Mammary epithelial cell (primary cell): ENCODE measurements at regions of chr5 and their contacts with region 1.

Region 1: DNA sequence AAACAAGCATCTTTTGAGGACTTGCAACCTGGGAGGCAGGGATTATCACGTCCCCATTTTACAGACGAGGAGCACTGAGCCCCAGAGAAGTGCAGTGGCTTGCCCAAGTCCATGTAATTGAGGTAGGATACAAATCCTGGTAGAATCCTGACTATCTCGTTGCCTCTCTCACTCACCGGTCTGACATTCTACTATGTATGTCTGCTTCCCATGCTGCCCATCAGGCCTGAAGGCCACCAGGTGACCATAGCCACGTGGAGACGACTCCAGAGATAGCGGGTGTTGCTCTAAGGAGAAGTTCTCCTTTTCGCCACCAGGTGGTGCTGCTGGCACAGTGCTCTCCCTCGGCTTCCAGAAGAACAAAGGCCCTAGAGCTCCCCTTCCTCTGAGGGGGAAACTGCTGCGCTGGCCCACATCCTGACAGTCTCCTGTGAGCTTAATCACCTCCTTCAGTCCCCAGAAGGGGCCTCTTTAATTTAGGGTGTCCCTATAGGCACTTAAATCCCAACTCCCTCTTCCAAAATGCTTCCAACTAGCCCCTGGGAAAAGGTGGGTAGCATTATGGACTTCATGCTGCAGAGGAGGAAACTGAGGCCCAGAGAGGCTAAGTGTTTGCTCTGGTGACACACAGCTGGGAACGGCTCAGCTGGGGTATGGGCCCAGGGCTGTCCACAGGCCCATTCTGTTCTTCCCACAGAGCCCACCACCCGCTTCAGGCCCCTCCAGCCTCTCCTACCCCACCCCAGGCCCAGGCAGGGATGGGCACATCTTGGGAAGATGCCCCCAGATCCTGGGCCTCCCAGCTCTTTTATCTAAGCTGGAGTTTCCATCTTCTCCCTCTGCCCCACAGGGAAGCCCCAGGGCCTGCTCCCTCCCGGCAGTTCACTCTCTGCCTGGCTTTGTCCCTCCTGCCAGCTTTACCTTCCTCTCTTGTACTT is 6.4 kb downstream of the SLC34A1 start:
- DNase-seq: peak; percentile 73
- H3K4me3 ChIP-seq: no peak overlapping the region
- H3K27ac ChIP-seq: peak overlapping the region; percentile 68
- H3K4me1 ChIP-seq: peaks cover 29% of the 10 kb centered on the region
- H3K27me3 ChIP-seq: no peaks in the 10 kb centered on the region
- CTCF ChIP-seq: peak; percentile 89 to 94

Region 2: DNA sequence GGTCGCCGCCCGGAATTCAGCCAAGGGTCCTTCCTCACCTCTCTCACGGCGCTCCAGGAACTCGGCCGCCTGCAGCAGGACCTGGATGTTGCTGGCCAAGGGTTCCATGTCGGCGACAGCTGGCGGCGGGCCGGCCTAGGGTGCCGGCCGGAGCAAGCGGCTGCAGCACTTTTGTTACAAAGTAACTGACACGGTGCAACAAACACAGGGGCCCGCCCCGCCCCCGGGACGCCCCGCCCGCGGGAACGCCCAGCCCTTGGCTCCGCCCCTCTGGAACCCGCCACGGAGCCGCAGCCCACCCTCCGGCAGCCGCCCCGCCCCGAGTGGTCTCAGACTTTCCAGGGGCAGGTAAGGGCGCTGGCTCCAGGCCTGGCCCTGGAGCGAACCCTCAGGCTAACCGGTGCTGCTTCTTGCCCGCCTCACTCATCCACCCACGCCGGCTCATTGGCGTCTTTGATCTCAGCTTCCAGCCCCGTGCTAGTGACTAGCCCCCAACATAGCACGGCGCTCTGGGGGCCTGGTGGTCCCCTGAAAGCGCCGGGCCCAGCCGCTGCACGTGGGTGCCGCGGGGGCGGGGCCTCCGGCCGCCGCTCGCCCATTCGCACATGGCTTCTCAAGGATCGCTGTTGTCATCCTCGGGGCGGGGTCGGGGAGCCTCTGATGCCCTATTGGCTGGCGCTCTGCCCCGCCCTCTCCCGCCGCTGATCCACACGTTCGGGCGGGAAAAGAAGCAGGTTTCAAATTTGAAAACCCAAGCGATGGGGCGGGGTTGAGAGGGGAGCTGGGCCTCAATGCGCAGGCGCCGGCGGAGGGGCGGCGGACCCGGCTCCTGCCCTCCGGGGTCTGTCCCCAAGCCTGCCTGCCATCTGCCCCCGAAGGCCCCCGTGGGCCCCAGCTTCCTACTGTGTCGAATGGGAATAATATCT is 78.6 kb before region 1 on chr5 and contains the start of gene MXD3:
- CTCF ChIA-PET with region 1: no interaction called
- dilution Hi-C with region 1: no loop called
- in situ Hi-C with region 1: no loop called
- intact Hi-C with region 1: loop called (anchors 2 kb)
- DNase-seq: peak; percentile 90
- H3K4me3 ChIP-seq: peak within 1 kb of the TSS; percentile 51 to 75 (median 63)
- H3K27ac ChIP-seq: peak within 1 kb of the TSS; percentile 62
- H3K4me1 ChIP-seq: peaks cover 27% of the 10 kb centered on the region
- H3K27me3 ChIP-seq: no peaks in the 10 kb centered on the region
- CTCF ChIP-seq: no peak
- total RNA-seq, gene MXD3: 0.83 to 10.7 TPM

Region 3: GRCh38 chr5:177317959-177318377 is 72.7 kb before region 1 on chr5:
- CTCF ChIA-PET with region 1: interaction called, 3 read pairs
- dilution Hi-C with region 1: no loop called
- in situ Hi-C with region 1: no loop called
- intact Hi-C with region 1: loop called (anchors 2 kb)
- DNase-seq: peak; percentile 61
- H3K4me3 ChIP-seq: no peak overlapping the region
- H3K27ac ChIP-seq: no peak overlapping the region
- H3K4me1 ChIP-seq: peaks cover 2% of the 10 kb centered on the region
- H3K27me3 ChIP-seq: no peaks in the 10 kb centered on the region
- CTCF ChIP-seq: peak; percentile 88

Region 4: GRCh38 chr5:177351385-177352329 is 39.0 kb before region 1 on chr5 and contains the start of gene LMAN2:
- CTCF ChIA-PET with region 1: no interaction called
- dilution Hi-C with region 1: no loop called
- in situ Hi-C with region 1: no loop called
- intact Hi-C with region 1: loop called (anchors 1 kb)
- DNase-seq: peak; percentile 97
- H3K4me3 ChIP-seq: peak within 1 kb of the TSS; percentile 58 to 86 (median 74)
- H3K27ac ChIP-seq: peak within 1 kb of the TSS; percentile 88
- H3K4me1 ChIP-seq: peaks cover 19% of the 10 kb centered on the region
- H3K27me3 ChIP-seq: no peaks in the 10 kb centered on the region
- CTCF ChIP-seq: no peak
- total RNA-seq, gene LMAN2: 114 to 201 TPM

Region 5: GRCh38 chr5:177362610-177363507 is 27.8 kb before region 1 on chr5:
- CTCF ChIA-PET with region 1: interaction called, 12 read pairs
- dilution Hi-C with region 1: no loop called
- in situ Hi-C with region 1: no loop called
- intact Hi-C with region 1: loop called (anchors 1 kb)
- DNase-seq: peak; percentile 66
- H3K4me3 ChIP-seq: peak overlapping the region; percentile 47 to 67 (median 63)
- H3K27ac ChIP-seq: no peak overlapping the region
- H3K4me1 ChIP-seq: peaks cover 22% of the 10 kb centered on the region
- H3K27me3 ChIP-seq: no peaks in the 10 kb centered on the region
- CTCF ChIP-seq: peak in 1 of 2 donors; percentile 10

Region 6: DNA sequence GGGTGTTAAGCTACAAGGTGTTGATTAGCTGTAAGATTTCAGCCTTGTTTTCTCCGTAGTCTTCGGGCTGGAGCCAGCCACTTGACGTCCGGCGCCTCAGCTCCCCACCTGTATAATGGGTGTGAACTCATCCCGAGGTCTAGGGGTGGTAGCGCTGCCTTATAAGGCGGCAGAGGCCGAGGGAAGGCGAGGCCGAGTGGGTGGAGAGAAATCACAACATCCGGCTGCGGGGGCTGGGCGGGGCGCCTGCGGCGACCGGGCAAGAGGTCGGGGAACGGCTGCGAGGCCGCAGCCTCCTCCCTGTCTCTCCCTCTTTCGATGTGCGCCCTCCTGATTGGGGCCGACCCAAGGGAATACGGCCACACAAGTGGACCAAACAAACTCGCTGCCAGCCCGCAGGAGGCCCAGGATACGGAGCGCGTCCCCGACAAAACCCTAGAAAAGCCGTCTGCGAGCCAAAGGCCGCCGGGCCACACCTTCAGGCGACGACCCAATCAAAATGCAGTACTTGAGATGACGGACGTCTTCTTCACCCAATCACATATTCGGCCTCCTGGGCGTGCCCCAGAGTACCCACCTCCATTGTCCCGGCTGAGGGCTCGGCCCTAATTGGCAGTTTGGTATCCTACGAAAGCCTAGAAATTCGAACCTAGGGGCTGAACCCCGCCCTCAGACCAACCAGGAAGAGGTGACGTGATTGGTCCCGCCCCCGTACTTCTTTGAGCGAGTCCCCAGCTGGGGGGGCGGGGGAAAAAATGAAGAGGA is 35.4 kb after region 1 on chr5:
- CTCF ChIA-PET with region 1: no interaction called
- dilution Hi-C with region 1: no loop called
- in situ Hi-C with region 1: no loop called
- intact Hi-C with region 1: loop called (anchors 1 kb)
- DNase-seq: peak; percentile 100
- H3K4me3 ChIP-seq: peak overlapping the region; percentile 51 to 68 (median 54)
- H3K27ac ChIP-seq: peak overlapping the region; percentile 71
- H3K4me1 ChIP-seq: peaks cover 31% of the 10 kb centered on the region
- H3K27me3 ChIP-seq: no peaks in the 10 kb centered on the region
- CTCF ChIP-seq: no peak

Region 7: DNA sequence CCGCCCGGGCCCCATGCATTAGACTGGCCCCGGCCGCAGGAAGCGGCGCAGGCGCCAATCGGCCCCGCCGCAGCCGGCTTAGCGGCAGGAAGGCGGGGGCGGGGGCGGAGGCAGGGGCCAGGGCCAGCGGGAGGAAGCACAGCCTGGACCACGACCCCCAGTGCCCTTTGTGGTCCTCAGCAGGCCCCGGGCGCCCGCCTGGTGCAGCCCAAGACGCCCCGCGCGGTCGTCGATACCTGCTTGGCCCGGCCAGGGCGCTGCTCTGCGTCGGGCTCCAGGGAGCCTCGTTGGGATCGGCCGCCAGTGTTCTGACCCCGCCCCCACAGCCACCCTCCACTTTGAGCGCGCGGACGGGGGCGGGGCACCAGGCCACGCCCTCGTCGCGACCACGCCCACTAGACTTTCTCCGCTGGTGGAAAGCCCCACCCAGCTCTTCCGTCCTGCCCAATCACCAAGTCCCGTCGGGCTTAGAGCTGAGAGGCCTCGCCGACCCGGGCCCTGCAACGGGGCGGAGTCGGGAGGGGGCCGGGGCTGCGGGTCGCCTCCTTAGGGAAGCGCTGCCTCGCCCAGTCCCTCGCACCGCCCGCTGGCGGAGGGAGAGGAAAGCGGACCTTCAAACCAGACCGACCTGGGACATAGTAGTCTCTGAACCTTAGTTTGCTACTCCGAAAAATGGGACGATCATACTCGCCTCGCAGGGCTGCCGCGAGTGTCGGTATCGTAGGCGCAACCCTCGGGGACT is 106.8 kb after region 1 on chr5 and contains the start of gene PDLIM7:
- CTCF ChIA-PET with region 1: no interaction called
- dilution Hi-C with region 1: no loop called
- in situ Hi-C with region 1: no loop called
- intact Hi-C with region 1: loop called (anchors 1 kb)
- DNase-seq: peak; percentile 95
- H3K4me3 ChIP-seq: peak within 1 kb of the TSS; percentile 73 to 80 (median 74)
- H3K27ac ChIP-seq: peak within 1 kb of the TSS; percentile 37
- H3K4me1 ChIP-seq: peaks cover 61% of the 10 kb centered on the region
- H3K27me3 ChIP-seq: no peaks in the 10 kb centered on the region
- CTCF ChIP-seq: peak in 1 of 2 donors; percentile 14
- total RNA-seq, gene PDLIM7: 235 to 259 TPM